WTC11 (cell line): ENCODE measurements at regions of chr12 and their contacts with region 1.

Region 1: DNA sequence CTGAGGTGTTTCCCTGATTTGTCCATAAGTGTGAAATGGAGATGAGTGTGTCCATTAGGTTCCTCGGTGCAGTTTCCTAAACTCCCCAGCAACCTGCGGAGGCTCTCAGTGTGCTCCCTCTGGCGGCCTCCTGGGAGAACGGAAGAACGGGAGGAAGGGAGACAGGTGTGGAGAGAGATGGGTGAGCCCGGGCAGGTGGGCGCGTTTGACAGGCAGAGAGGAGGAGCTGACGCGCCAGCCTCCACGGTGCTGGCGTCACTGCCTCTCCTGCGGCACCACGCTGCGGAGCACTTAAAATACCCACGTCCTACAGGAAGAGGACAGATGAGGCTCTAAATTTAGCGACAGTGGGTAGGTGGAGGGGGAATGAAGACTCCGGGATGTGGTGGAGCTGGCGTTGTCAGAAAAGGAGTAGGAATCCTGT is 26.8 kb upstream of the PEX5 start:
- DNase-seq: peak; percentile 73
- ATAC-seq: peak; percentile 97
- H3K4me3 Mint-ChIP-seq: peak overlapping the region; percentile 44
- H3K27ac Mint-ChIP-seq: no peak overlapping the region
- H3K4me1 Mint-ChIP-seq: peaks cover 4% of the 10 kb centered on the region; the same call in 1 of the 2 replicates
- H3K27me3 Mint-ChIP-seq: peaks cover 48% of the 10 kb centered on the region
- CTCF ChIP-seq: peak; percentile 23; the same call in 1 of the 2 replicates

Region 2: DNA sequence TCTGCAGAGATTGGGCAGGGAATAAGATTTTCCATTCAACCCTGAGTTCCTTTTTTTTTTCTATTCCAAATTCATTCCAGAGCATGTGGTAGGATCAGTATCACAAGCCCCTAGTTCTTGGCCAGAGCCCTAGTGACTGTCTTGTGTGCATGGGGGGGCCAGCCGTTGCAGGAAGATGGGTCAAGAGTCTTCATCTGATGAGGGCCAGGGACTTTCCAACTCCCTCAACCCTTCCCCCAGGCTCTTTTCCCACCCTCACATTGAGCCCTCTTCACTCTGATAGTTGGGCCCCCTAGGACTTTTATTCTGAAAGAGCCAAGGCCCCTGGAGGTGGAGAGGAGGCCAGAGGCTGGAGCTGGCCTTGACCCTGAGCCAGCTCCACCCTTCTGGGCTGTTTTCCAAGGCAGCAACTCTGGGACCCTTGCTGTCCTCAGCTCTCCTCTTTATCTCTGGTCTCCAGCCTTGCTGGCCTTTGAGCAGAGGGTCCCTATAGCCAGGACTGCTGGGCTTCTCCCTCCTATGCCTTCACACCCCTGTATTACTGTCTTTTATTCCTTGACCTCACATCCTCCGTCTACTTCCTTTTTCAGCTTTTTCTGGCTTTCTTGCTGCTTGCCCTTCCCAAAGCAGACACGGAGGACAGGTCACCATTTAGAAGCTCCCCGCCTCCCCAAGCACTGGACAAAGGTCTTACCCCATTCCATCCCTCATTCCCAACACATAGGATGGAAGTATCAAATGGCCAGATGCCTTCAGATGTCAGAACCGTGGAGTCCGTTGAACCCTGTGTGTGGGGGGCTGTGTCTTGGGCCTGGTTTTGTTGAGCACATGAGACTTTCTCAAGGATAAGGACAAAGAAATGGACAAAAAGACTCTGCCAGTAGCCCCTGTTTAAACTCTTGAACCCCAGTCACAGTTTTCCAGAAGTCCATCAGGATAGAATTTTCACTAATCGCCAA is 39.6 kb before region 1 on chr12:
- CTCF ChIA-PET with region 1: no interaction called
- POLR2A ChIA-PET with region 1: no interaction called
- DNase-seq: no peak
- ATAC-seq: no peak
- H3K4me3 Mint-ChIP-seq: no peak overlapping the region
- H3K27ac Mint-ChIP-seq: no peak overlapping the region
- H3K4me1 Mint-ChIP-seq: peaks cover 15% of the 10 kb centered on the region
- H3K27me3 Mint-ChIP-seq: peaks cover 5% of the 10 kb centered on the region
- CTCF ChIP-seq: no peak

Region 3: DNA sequence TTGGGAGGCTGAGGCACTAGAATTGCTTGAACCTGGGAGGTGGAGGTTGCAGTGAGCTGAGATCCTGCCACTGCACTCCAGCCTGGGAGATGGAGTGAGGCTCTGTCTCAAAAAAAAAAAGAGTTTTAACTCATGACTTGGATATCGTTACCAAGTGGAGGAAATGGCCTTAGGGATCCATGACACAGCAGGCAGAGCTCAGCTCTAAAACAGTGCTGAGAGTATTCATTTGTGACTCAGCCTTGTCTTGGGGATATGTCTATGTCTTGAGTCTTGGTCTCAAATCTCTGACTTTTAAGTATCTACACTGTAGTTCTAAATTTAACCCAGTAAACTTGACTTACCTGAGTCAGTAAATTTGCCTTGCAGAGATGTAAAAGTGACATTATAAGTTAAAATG is 18.0 kb after region 1 on chr12:
- CTCF ChIA-PET with region 1: interaction called, 11 read pairs
- POLR2A ChIA-PET with region 1: no interaction called
- DNase-seq: no peak
- ATAC-seq: no peak
- H3K4me3 Mint-ChIP-seq: no peak overlapping the region
- H3K27ac Mint-ChIP-seq: no peak overlapping the region
- H3K4me1 Mint-ChIP-seq: peaks cover 2% of the 10 kb centered on the region
- H3K27me3 Mint-ChIP-seq: peaks cover 37% of the 10 kb centered on the region
- CTCF ChIP-seq: no peak

Region 4: GRCh38 chr12:7188562-7189397 is 26.1 kb after region 1 on chr12:
- CTCF ChIA-PET with region 1: interaction called, 13 read pairs
- POLR2A ChIA-PET with region 1: no interaction called
- DNase-seq: peak; percentile 91
- ATAC-seq: peak; percentile 74
- H3K4me3 Mint-ChIP-seq: peak overlapping the region; percentile 87
- H3K27ac Mint-ChIP-seq: no peak overlapping the region
- H3K4me1 Mint-ChIP-seq: peaks cover 29% of the 10 kb centered on the region
- H3K27me3 Mint-ChIP-seq: peaks cover 2% of the 10 kb centered on the region
- CTCF ChIP-seq: 0 out of 2 replicates have a peak, but pooled peaks have one; percentile 30

Region 5: DNA sequence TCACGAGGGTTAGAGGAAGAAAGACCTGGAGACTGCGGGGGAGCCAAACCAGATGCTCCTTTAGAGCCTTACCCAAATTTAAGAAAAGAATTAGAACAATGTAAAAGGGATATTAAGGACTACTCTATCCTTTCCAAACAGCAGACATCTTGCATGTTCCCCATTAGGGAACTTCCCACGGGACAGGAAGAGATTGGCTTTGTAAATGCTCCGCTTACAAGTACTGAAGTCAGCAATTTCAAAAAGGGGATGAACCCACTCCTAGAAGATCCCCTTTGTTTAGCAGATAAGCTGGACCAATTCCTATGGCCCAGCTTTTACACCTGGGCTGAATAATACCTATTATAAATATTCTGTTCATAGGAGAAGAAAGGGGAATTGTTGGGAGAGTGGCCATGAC is 428.8 kb after region 1 on chr12:
- CTCF ChIA-PET with region 1: no interaction called
- POLR2A ChIA-PET with region 1: no interaction called
- DNase-seq: no peak
- ATAC-seq: no peak
- H3K4me3 Mint-ChIP-seq: no peak overlapping the region
- H3K27ac Mint-ChIP-seq: no peak overlapping the region
- H3K4me1 Mint-ChIP-seq: no peaks in the 10 kb centered on the region
- H3K27me3 Mint-ChIP-seq: peaks cover 4% of the 10 kb centered on the region; the same call in 1 of the 2 replicates
- CTCF ChIP-seq: no peak